ENCODE measurements at regions of chr12 and their contacts with region 1.

Region 1: GRCh38 chr12:120562906-120563305 is 18.3 kb downstream of the POP5 start:
- DNase-seq: no peak
- ATAC-seq: no peak
- H3K4me3 ChIP-seq: no peak overlapping the region
- H3K27ac ChIP-seq: no peak overlapping the region
- H3K4me1 ChIP-seq: no peaks in the 10 kb centered on the region
- H3K27me3 ChIP-seq: no peaks in the 10 kb centered on the region
- CTCF ChIP-seq: no peak
- POLR2A ChIP-seq: no peak

Region 2: DNA sequence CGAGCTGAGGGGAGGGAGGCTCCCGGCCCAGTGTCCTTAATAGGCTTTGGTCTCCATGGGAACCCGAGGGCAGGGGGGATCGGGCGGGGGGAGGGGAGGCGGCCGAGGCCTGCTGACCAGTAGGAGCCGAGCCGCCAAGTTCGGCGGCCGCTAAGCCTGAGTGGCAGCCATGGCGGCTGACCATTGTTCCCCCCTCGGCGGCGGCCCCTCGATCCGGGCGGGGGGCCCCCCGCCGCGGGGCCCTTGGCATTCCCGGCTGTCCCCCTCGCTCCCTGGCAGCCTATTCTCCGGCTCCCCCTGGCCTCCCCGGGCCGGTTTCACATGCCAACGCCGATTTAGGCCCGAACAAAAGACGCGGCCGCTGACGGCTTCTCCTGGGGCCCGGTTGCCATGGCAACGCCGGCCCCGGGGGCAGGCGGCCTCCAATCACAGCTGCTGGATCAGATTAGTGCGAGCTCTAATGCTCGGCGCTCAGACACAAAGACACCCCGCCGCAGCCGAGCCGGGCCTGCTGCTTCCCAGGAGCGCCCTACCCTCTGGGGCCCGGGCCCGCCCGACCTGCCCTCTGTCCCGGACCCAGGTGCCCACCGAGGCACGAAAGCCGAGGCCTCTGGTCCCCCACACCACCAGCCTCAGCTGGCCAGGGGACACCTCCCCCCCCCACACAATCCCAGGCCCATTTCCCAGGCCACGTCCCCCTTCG is 201.2 kb before region 1 on chr12:
- intact Hi-C with region 1: no loop called
- DNase-seq: no peak
- ATAC-seq: no peak
- H3K4me3 ChIP-seq: no peak overlapping the region
- H3K27ac ChIP-seq: no peak overlapping the region
- H3K4me1 ChIP-seq: peaks cover 0 to 8% (median 0%) of the 10 kb centered on the region in 4 donors
- H3K27me3 ChIP-seq: no peaks in the 10 kb centered on the region
- CTCF ChIP-seq: no peak
- POLR2A ChIP-seq: no peak

Region 3: GRCh38 chr12:120453977-120454376 is 108.9 kb before region 1 on chr12:
- intact Hi-C with region 1: loop called in 1 of 2 experiments (anchors 10 kb)
- DNase-seq: peak in 1 of 3 donors; percentile 3
- ATAC-seq: peak; percentile 52 to 60 (median 54)
- H3K4me3 ChIP-seq: no peak overlapping the region
- H3K27ac ChIP-seq: no peak overlapping the region
- H3K4me1 ChIP-seq: peaks cover 0 to 22% (median 6%) of the 10 kb centered on the region in 4 donors
- H3K27me3 ChIP-seq: no peaks in the 10 kb centered on the region
- CTCF ChIP-seq: peak; percentile 28 to 54 (median 48)
- POLR2A ChIP-seq: no peak

Region 4: GRCh38 chr12:121095544-121096198 is 532.8 kb after region 1 on chr12:
- intact Hi-C with region 1: no loop called
- DNase-seq: peak; percentile 73 to 83 (median 78)
- ATAC-seq: peak; percentile 97 to 99 (median 98)
- H3K4me3 ChIP-seq: peak overlapping the region; percentile 0 to 35 (median 31)
- H3K27ac ChIP-seq: no peak overlapping the region
- H3K4me1 ChIP-seq: peaks cover 0 to 10% (median 4%) of the 10 kb centered on the region in 4 donors
- H3K27me3 ChIP-seq: no peaks in the 10 kb centered on the region
- CTCF ChIP-seq: peak; percentile 70 to 86 (median 84)
- POLR2A ChIP-seq: no peak

Measured in right lobe of liver (tissue), 6 donors.